Right cardiac atrium (tissue), 5 donors: ENCODE measurements at regions of chr19 and their contacts with region 1.

Region 1: DNA sequence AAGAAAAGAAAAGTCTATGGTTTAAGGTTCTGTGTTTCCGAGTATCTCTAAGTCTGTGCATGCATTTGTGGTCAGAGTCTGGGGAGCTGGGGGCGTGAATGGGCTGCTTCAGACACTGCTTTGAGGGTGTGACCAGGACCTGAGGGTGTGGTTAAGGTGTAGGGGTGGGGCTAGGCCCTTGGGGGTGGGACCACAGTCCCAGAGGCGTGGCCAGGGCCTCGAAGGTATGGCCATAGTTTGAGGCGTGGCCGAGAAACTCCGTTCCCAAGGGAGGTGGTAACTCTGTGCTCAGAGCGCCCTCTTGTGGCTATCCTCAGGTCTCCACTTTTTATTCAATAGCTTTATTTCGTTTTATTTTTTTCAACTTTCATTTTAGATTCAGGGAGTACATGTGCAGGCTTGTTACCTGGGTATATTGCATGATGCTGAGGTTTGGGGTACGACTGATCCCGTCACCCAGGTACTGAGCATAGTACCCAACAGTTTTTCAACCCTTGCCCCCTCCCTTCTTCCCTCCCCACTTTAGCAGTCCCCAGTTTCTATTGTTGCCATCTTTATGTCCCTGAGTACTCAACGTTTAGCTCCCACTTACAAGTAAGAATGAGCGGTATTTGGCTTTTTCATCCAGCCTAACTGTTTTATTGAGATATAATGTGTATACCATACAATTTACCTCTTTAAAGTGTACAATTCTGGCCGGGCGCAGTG is 7.0 kb upstream of the CBLC start:
- DNase-seq: peak; percentile 91 to 96 (median 95)
- ATAC-seq: peak; percentile 98
- H3K4me3 ChIP-seq: no peak overlapping the region
- H3K27ac ChIP-seq: no peak overlapping the region
- H3K4me1 ChIP-seq: no peaks in the 10 kb centered on the region
- H3K27me3 ChIP-seq: no peaks in the 10 kb centered on the region

Region 2: GRCh38 chr19:44689056-44689895 is 81.4 kb before region 1 on chr19:
- intact Hi-C with region 1: loop called in 1 of 4 experiments (anchors 2 kb)
- DNase-seq: peak; percentile 78 to 92 (median 92)
- ATAC-seq: peak; percentile 33 to 66
- H3K4me3 ChIP-seq: no peak overlapping the region
- H3K27ac ChIP-seq: no peak overlapping the region
- H3K4me1 ChIP-seq: peaks cover 2% of the 10 kb centered on the region
- H3K27me3 ChIP-seq: no peaks in the 10 kb centered on the region

Region 3: GRCh38 chr19:44723952-44724319 is 46.8 kb before region 1 on chr19:
- intact Hi-C with region 1: loop called (anchors 1 to 5 kb)
- DNase-seq: peak; percentile 81 to 93 (median 92)
- ATAC-seq: peak; percentile 88 to 90
- H3K4me3 ChIP-seq: no peak overlapping the region
- H3K27ac ChIP-seq: peak overlapping the region; percentile 23
- H3K4me1 ChIP-seq: peaks cover 13% of the 10 kb centered on the region
- H3K27me3 ChIP-seq: no peaks in the 10 kb centered on the region

Region 4: DNA sequence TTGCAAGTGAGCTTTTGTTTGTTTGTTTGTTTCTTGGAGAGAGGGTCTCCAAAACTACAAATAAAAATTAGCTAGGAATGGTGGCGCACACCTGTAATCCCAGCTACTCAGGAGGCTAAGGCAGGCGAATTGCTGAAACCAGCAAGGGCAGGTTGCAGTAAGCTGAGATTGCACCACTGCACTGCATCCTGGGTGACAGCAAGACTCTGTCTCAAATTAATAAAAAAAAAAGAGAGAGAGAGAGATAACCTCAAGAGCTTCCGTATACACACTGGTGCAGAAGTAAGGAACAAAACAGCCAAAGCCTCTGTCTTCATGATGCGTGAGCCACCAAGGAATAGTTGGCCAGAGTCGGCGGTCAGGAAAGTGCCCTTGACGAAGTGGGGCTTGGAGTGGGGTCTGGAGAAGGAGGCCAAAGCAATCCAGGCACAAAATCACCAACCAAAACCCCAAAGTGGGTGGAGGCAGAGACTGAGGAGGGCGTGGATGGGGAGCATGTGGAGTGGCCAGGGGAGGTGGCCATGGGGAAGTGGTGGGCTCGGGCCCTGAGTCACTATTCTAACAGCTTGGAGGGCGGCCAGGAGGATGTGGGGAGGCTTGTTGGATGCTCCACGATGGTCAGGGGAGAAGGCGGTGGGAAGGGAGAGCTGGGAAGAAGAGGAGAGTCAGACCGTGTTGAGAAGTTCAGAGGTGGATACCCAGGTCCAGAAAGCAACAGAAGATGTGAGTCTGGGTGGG is 99.2 kb after region 1 on chr19:
- intact Hi-C with region 1: no loop called
- DNase-seq: peak; percentile 72 to 80 (median 80)
- ATAC-seq: peak; percentile 24 to 49
- H3K4me3 ChIP-seq: no peak overlapping the region
- H3K27ac ChIP-seq: peak overlapping the region; percentile 77
- H3K4me1 ChIP-seq: no peaks in the 10 kb centered on the region
- H3K27me3 ChIP-seq: no peaks in the 10 kb centered on the region